ENCODE measurements at regions of chr12 and their contacts with region 1.

Region 1: GRCh38 chr12:3885277-3886094 is 12.3 kb upstream of the PARP11 start:
- DNase-seq: peak; percentile 56
- ATAC-seq: no peak
- H3K4me3 Mint-ChIP-seq: no peak overlapping the region
- H3K27ac Mint-ChIP-seq: no peak overlapping the region
- H3K4me1 Mint-ChIP-seq: peaks cover 5% of the 10 kb centered on the region
- H3K27me3 Mint-ChIP-seq: no peaks in the 10 kb centered on the region
- CTCF ChIP-seq: peak; percentile 96

Region 2: GRCh38 chr12:3761116-3761735 is 124.3 kb before region 1 on chr12:
- CTCF ChIA-PET with region 1: no interaction called
- POLR2A ChIA-PET with region 1: no interaction called
- intact Hi-C with region 1: no loop called
- DNase-seq: no peak
- ATAC-seq: no peak
- H3K4me3 Mint-ChIP-seq: no peak overlapping the region
- H3K27ac Mint-ChIP-seq: no peak overlapping the region
- H3K4me1 Mint-ChIP-seq: no peaks in the 10 kb centered on the region
- H3K27me3 Mint-ChIP-seq: no peaks in the 10 kb centered on the region
- CTCF ChIP-seq: no peak

Region 3: DNA sequence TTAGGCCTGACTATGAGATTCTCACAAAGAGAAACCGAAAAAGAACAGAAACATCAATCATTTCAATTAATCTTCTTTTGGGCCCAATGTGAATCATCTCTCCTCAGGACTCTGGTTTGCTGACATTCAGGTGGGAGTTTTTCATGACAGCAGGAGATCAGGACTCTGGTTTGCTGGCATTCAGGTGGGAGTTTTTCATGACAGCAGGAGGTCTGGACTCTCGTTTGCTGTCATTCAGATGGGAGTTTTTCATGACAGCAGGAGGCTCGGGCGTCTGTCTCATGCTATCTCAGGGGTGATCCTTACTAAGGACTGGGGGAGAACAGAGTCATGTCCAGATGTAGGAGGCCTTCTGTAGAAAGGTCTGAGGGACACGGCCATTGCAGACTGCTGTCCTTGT is 27.8 kb after region 1 on chr12:
- CTCF ChIA-PET with region 1: interaction called, 13 read pairs
- POLR2A ChIA-PET with region 1: no interaction called
- intact Hi-C with region 1: no loop called
- DNase-seq: peak; percentile 55
- ATAC-seq: peak; percentile 86
- H3K4me3 Mint-ChIP-seq: no peak overlapping the region
- H3K27ac Mint-ChIP-seq: peak overlapping the region; percentile 50
- H3K4me1 Mint-ChIP-seq: peaks cover 14% of the 10 kb centered on the region
- H3K27me3 Mint-ChIP-seq: no peaks in the 10 kb centered on the region
- CTCF ChIP-seq: no peak

Region 4: DNA sequence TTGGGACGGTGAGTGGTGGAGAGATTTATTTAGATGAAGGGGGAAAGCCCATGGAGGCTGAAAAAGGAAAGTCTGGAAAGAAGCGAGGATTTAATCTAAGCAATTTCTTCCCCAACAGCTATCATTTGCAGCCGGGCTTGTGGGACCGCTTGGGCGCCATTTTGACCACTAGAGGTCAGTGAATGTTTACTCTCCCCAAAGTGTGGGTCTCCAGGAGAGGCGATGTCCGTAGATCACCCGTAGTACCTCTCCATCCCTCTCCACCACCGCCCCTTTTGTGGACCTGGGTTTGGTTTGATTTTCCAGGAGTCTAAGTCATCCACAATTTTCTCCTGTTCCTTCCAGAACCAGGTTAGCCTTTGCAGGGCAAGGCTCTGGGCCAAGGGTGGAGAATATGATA is 79.0 kb after region 1 on chr12:
- CTCF ChIA-PET with region 1: interaction called, 77 read pairs
- POLR2A ChIA-PET with region 1: interaction called, 3 read pairs
- intact Hi-C with region 1: loop called (anchors 10 kb)
- DNase-seq: peak; percentile 50
- ATAC-seq: no peak
- H3K4me3 Mint-ChIP-seq: no peak overlapping the region
- H3K27ac Mint-ChIP-seq: no peak overlapping the region
- H3K4me1 Mint-ChIP-seq: peaks cover 20% of the 10 kb centered on the region
- H3K27me3 Mint-ChIP-seq: no peaks in the 10 kb centered on the region
- CTCF ChIP-seq: no peak

Region 5: DNA sequence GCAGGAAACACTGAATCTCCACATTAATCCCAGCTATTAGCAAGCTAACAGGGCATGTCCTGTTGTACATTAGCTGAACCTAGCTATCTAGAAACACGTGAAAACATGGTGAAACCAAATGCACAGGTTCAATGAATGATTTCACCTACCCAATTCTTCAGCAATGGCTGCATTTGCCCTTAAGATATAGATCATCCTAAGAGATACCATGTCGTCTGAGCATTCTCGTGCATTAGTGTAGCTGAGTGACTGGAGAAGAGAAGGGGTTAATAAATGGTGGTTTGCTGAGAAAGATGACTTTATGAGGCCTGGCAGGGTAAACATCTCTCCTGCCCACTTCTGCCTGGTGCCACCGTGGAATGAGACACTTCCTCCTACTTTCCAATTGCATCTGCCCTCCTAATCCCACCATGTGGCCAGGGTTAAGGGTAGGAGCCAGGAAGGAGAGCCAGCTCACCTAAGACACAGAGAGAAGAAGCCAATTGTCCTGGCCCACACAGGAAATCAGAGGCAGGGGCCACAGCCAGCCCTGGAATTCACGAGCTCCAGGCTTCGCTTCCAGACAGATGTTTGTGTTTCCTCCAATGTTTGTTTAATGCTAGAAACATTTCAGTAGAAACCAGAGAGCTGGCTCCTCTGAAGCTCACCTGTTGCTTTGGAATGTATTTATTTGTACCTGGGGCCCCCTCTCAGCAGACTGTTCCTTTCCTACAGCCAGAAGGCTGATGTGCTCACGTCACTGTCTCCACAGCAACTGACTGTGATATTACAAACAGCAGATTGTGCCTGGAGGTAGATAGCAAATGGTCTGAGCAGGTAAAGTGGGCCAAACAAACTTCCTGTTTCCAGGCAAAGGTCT is 113.7 kb after region 1 on chr12:
- CTCF ChIA-PET with region 1: interaction called, 124 read pairs
- POLR2A ChIA-PET with region 1: no interaction called
- intact Hi-C with region 1: no loop called
- DNase-seq: no peak
- ATAC-seq: no peak
- H3K4me3 Mint-ChIP-seq: no peak overlapping the region
- H3K27ac Mint-ChIP-seq: no peak overlapping the region
- H3K4me1 Mint-ChIP-seq: peaks cover 27% of the 10 kb centered on the region
- H3K27me3 Mint-ChIP-seq: no peaks in the 10 kb centered on the region
- CTCF ChIP-seq: no peak

Region 6: GRCh38 chr12:4107436-4107878 is 222.0 kb after region 1 on chr12:
- CTCF ChIA-PET with region 1: interaction called, 13 read pairs
- POLR2A ChIA-PET with region 1: no interaction called
- intact Hi-C with region 1: no loop called
- DNase-seq: peak; percentile 88
- ATAC-seq: peak; percentile 92
- H3K4me3 Mint-ChIP-seq: peak overlapping the region; percentile 44
- H3K27ac Mint-ChIP-seq: peak overlapping the region; percentile 90
- H3K4me1 Mint-ChIP-seq: peaks cover 39% of the 10 kb centered on the region
- H3K27me3 Mint-ChIP-seq: peaks cover 2% of the 10 kb centered on the region
- CTCF ChIP-seq: peak; percentile 68

Region 7: DNA sequence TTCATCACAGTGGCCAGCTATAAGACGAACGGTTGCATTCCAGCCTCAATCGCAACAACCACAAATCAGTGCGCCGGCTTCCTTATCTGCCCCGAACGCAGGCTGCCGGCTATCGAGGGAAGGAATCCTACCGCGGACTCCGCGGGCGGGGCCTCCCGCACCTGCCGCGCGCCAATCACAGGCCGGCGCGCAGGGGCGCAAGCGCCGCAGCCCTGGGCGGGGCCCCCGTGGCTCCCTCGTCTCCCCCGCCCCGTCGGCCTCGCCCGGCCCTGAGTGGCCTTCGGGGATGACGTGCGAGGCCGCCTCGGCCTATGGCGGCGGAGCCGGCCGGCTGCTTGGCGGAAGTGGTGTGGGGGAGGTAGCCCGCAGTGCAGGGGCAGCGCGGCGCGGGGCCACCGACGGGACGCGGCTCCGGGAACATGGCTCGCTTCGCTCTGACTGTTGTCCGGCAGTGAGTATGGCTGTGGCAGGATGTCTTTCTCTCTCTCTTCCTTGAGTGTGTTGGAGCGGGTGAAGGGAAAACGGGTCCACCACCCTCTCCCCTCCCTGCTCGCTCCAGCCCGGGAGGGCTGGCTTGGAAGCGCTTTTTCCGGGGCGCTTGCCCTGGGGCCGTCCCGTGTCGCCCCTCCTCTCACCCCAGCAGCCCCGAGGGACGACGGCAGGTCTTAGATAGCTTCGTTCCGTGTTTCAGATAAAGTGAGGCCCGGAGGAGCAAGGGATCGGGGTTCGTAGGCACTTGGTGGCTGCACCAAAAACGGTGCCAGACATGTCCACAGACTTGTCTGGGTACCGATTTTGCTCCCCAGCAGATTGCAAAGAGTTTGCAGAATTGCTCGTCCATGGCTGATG is 435.6 kb after region 1 on chr12 and contains the start of gene TIGAR:
- CTCF ChIA-PET with region 1: interaction called, 12 read pairs
- POLR2A ChIA-PET with region 1: no interaction called
- intact Hi-C with region 1: no loop called
- DNase-seq: peak; percentile 93
- ATAC-seq: peak; percentile 99
- H3K4me3 Mint-ChIP-seq: peak within 1 kb of the TSS; percentile 88
- H3K27ac Mint-ChIP-seq: peak within 1 kb of the TSS; percentile 87
- H3K4me1 Mint-ChIP-seq: peaks cover 30% of the 10 kb centered on the region
- H3K27me3 Mint-ChIP-seq: no peaks in the 10 kb centered on the region
- CTCF ChIP-seq: no peak
- total RNA-seq, gene TIGAR: 8.2 to 8.7 TPM

Measured in activated CD8-positive, alpha-beta T cell treated with anti-CD3 and anti-CD28 coated beads for 36 hours (primary cell).